ENCODE measurements at regions of chr6 and their contacts with region 1.

Region 1: GRCh38 chr6:52263709-52264540 is 19.6 kb upstream of the IL17F start:
- DNase-seq: peak; percentile 68
- ATAC-seq: peak; percentile 69
- H3K4me3 Mint-ChIP-seq: no peak overlapping the region
- H3K27ac Mint-ChIP-seq: peak overlapping the region; percentile 54; the same call in 1 of the 2 replicates
- H3K4me1 Mint-ChIP-seq: no peaks in the 10 kb centered on the region
- H3K27me3 Mint-ChIP-seq: no peaks in the 10 kb centered on the region
- CTCF ChIP-seq: peak; percentile 84

Region 2: DNA sequence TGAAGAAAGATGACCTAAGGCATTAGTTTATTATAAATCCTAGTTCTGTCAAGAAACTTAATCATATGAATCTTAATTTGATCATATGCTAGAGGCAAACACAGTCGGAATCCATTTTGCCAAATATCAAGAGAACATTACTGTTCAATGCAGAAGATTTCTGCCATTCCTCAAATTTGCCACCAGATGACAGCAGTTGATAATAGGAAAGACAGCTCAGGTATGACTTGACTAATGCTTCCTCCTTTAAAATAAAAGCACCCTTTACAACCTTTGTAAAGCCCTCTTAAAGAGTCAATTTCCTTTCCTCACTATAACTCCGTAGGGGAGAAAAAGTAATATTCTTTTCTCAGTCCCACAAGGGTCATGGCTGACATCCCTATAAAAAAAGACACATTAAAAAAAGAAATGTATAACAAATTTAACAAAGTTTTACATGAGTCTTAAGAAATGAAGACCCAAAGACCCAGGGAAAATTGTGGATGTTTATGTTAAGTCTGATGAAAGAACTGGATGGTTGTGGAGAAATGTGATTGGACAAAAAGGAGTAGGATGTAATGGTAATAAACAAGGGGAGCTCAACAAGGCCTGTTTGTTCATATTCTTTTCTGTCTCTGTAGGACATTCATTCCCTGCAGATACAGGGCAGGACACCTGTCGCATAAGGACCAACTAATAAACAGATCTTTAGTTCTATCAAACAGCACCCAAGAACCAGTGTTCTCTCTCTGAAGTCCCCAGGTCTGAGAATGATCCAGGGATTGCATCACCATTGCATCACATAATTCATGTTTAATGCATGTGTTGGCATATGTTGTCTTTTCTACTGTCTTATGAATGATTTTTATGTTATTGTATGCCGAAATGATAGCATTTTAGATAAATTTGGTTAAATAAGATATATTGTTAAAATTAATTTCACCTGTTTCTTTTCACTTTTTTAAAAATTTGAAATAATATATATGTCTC is 100.7 kb before region 1 on chr6:
- CTCF ChIA-PET with region 1: interaction called, 16 read pairs
- POLR2A ChIA-PET with region 1: no interaction called
- DNase-seq: no peak
- ATAC-seq: peak; percentile 89
- H3K4me3 Mint-ChIP-seq: no peak overlapping the region
- H3K27ac Mint-ChIP-seq: no peak overlapping the region
- H3K4me1 Mint-ChIP-seq: peaks cover 2% of the 10 kb centered on the region; the same call in 1 of the 2 replicates
- H3K27me3 Mint-ChIP-seq: no peaks in the 10 kb centered on the region; the same call in 1 of the 2 replicates
- CTCF ChIP-seq: peak; percentile 30; the same call in 1 of the 2 replicates

Region 3: DNA sequence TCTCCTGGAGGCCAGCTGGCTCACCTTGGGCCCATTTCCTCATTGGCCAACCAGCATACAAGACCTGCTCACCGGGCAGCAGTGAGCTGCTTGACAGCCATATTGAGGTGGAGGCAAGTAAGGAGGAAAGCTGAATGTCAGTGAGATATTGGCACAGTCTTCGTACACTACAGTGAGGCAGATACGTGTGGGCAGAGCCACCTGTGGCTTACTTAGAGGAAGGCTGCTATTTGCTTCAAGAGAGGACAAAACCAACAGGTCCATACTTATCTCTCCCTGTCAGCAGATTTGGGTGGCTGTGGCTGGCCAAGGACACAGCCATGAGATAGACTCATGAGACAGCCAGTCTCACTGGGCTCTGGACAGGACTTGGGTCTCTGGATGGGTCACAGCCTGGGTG is 35.7 kb after region 1 on chr6:
- CTCF ChIA-PET with region 1: no interaction called
- POLR2A ChIA-PET with region 1: no interaction called
- DNase-seq: no peak
- ATAC-seq: no peak
- H3K4me3 Mint-ChIP-seq: no peak overlapping the region
- H3K27ac Mint-ChIP-seq: no peak overlapping the region
- H3K4me1 Mint-ChIP-seq: no peaks in the 10 kb centered on the region
- H3K27me3 Mint-ChIP-seq: no peaks in the 10 kb centered on the region
- CTCF ChIP-seq: no peak